Breast epithelium (tissue), 4 donors: ENCODE measurements at regions of chr3 and their contacts with region 1.

Region 1: GRCh38 chr3:18527691-18528090 is 102.6 kb upstream of the SATB1 start:
- DNase-seq: no peak
- H3K4me3 ChIP-seq: no peak overlapping the region
- H3K27ac ChIP-seq: no peak overlapping the region
- H3K4me1 ChIP-seq: no peaks in the 10 kb centered on the region
- H3K27me3 ChIP-seq: no peaks in the 10 kb centered on the region
- CTCF ChIP-seq: no peak
- POLR2A ChIP-seq: no peak

Region 2: GRCh38 chr3:17655743-17656142 is 871.9 kb before region 1 on chr3:
- intact Hi-C with region 1: loop called (anchors 10 kb)
- DNase-seq: no peak
- H3K4me3 ChIP-seq: no peak overlapping the region
- H3K27ac ChIP-seq: no peak overlapping the region
- H3K4me1 ChIP-seq: no peaks in the 10 kb centered on the region
- H3K27me3 ChIP-seq: no peaks in the 10 kb centered on the region
- CTCF ChIP-seq: no peak
- POLR2A ChIP-seq: no peak

Region 3: GRCh38 chr3:18454766-18455165 is 72.9 kb before region 1 on chr3:
- intact Hi-C with region 1: loop called (anchors 5 kb)
- DNase-seq: no peak
- H3K4me3 ChIP-seq: no peak overlapping the region
- H3K27ac ChIP-seq: no peak overlapping the region
- H3K4me1 ChIP-seq: no peaks in the 10 kb centered on the region
- H3K27me3 ChIP-seq: no peaks in the 10 kb centered on the region
- CTCF ChIP-seq: no peak
- POLR2A ChIP-seq: no peak

Region 4: DNA sequence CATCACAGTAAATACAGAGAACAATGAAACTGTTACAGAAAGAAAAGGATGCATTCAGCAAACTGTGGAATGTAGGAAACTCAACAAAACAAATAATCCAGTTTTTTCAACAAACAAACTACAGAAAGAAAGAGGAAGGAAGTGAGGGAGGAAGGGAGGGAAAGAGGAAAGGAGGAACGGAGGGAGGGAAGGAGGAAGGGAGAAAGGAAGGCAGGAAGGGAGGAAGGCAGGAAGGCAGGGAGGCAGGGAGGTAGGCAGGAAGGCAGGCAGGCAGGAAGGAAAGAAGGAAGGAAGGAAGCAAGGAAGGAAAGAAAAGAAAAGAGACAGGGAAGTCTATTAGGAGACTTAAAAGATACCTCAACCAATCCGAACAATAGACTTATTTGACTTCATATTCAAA is 1270.6 kb after region 1 on chr3:
- intact Hi-C with region 1: no loop called
- DNase-seq: no peak
- H3K4me3 ChIP-seq: no peak overlapping the region
- H3K27ac ChIP-seq: no peak overlapping the region
- H3K4me1 ChIP-seq: no peaks in the 10 kb centered on the region
- H3K27me3 ChIP-seq: no peaks in the 10 kb centered on the region
- CTCF ChIP-seq: no peak
- POLR2A ChIP-seq: no peak